WTC11 (cell line): ENCODE measurements at regions of chr7 and their contacts with region 1.

Region 1: GRCh38 chr7:24812310-24812945 is 55.2 kb upstream of the GSDME start:
- DNase-seq: peak; percentile 63
- ATAC-seq: peak; percentile 91
- H3K4me3 Mint-ChIP-seq: no peak overlapping the region
- H3K27ac Mint-ChIP-seq: no peak overlapping the region
- H3K4me1 Mint-ChIP-seq: no peaks in the 10 kb centered on the region
- H3K27me3 Mint-ChIP-seq: no peaks in the 10 kb centered on the region
- CTCF ChIP-seq: peak; percentile 91

Region 2: DNA sequence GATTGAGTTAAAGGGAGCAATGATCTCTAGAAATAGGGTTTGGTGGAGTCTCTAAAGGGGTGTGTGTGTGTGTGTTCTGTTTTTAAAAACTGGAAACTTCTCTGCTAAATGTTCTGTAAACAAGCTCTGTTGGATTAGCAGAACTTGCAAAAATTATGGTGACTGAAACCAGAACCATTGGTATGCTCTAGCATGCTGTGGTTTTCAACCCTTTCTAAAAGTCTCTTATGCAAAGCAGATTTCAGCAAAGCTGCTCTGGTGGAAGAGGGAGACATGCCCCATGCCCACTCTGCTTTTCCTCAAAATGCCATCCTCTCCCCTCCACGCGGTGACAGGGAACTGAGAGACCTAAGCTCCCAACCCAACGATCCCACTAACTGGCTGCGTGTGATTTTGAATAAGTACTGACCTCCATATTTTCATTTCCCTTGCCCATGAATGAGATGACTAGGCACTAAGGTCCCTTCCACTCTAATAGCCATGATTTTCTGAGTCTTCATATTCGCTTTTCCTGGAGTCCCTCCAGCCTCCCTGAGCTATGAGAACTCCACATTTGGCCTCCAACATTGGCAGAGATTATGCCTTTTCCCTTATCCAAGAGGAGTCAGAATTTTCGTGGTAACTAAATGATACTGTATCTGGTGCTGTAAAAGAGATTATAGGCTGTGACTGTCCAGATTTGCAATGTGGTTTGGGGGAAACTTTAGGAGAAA is 356.5 kb before region 1 on chr7:
- CTCF ChIA-PET with region 1: no interaction called
- POLR2A ChIA-PET with region 1: no interaction called
- DNase-seq: no peak
- ATAC-seq: no peak
- H3K4me3 Mint-ChIP-seq: no peak overlapping the region
- H3K27ac Mint-ChIP-seq: no peak overlapping the region
- H3K4me1 Mint-ChIP-seq: peaks cover 8% of the 10 kb centered on the region
- H3K27me3 Mint-ChIP-seq: peaks cover 23% of the 10 kb centered on the region
- CTCF ChIP-seq: no peak

Region 3: DNA sequence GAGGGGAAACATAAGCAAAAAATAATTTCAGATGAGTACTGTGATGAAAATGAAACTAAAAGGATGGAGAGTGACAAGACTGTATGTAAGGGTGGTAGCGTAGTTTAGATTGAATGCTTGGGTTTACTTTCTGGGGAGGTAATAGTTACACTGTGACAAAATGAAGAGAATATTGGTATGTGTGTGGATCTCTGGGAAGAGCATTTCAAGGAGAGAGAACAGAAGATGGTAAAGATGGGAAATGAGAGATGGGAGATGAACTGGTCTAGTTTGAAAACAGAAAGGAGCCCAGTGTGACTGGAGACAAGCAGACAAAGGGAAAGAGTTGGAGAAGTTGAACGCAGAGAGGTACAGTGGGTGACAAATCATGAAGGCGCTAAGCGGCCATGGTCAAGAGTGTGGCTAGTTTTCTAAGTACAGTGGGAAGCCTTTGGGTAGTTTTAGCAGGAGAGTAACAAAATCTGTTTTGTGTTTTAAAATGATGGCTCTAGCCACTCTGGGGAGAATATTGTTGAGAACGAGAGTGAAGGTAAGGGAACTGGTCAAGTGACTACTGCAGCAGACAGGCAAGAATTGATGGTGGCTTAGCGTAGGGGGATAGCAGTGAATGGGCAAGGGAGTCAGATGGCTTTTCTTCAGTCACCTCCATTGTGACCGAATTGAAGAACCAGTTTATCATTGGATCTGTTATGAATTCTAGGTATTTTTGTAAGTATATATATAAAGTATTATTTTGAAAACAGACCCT is 216.6 kb before region 1 on chr7:
- CTCF ChIA-PET with region 1: no interaction called
- POLR2A ChIA-PET with region 1: no interaction called
- DNase-seq: no peak
- ATAC-seq: no peak
- H3K4me3 Mint-ChIP-seq: no peak overlapping the region
- H3K27ac Mint-ChIP-seq: no peak overlapping the region
- H3K4me1 Mint-ChIP-seq: 0 out of 2 replicates have a peak, but pooled peaks cover 3% of the 10 kb centered on the region
- H3K27me3 Mint-ChIP-seq: no peaks in the 10 kb centered on the region
- CTCF ChIP-seq: no peak

Region 4: GRCh38 chr7:24685708-24686107 is 126.7 kb before region 1 on chr7:
- CTCF ChIA-PET with region 1: no interaction called
- POLR2A ChIA-PET with region 1: no interaction called
- DNase-seq: no peak
- ATAC-seq: peak; percentile 90
- H3K4me3 Mint-ChIP-seq: no peak overlapping the region
- H3K27ac Mint-ChIP-seq: peak overlapping the region; percentile 23
- H3K4me1 Mint-ChIP-seq: peaks cover 21% of the 10 kb centered on the region
- H3K27me3 Mint-ChIP-seq: no peaks in the 10 kb centered on the region
- CTCF ChIP-seq: no peak

Region 5: GRCh38 chr7:24727154-24728120 is 85.0 kb before region 1 on chr7:
- CTCF ChIA-PET with region 1: interaction called, 16 read pairs
- POLR2A ChIA-PET with region 1: no interaction called
- DNase-seq: no peak
- ATAC-seq: no peak
- H3K4me3 Mint-ChIP-seq: no peak overlapping the region
- H3K27ac Mint-ChIP-seq: no peak overlapping the region
- H3K4me1 Mint-ChIP-seq: peaks cover 49% of the 10 kb centered on the region
- H3K27me3 Mint-ChIP-seq: peaks cover 34% of the 10 kb centered on the region
- CTCF ChIP-seq: no peak

Region 6: GRCh38 chr7:24800667-24801066 is 11.8 kb before region 1 on chr7:
- CTCF ChIA-PET with region 1: interaction called, 11 read pairs
- POLR2A ChIA-PET with region 1: no interaction called
- DNase-seq: no peak
- ATAC-seq: no peak
- H3K4me3 Mint-ChIP-seq: no peak overlapping the region
- H3K27ac Mint-ChIP-seq: no peak overlapping the region
- H3K4me1 Mint-ChIP-seq: peaks cover 3% of the 10 kb centered on the region
- H3K27me3 Mint-ChIP-seq: no peaks in the 10 kb centered on the region
- CTCF ChIP-seq: no peak

Region 7: DNA sequence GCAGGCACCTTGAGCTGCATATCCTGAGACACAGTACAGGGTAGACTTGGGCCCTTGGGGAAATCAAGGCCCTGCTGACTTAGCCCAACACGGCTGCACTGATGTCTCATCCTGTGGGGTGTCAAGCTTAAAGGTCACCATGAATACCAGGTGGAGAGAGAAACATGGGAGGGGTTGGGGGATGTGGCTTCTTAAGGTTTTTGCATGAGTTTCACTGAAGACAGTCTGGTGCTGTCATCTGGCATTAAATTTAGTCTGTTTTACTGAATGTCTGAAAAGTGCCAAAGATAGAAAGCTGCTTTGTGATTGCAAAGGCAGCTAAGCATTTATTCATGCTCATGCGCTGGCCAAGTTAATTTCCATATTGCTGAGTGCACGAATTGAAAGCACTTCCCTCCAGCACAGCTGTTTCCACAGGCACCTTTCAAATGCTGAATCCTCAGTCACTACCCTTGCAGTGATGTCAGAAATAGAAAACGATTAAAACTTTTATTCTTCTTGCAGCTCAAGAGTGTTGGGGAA is 65.4 kb after region 1 on chr7:
- CTCF ChIA-PET with region 1: interaction called, 35 read pairs
- POLR2A ChIA-PET with region 1: no interaction called
- DNase-seq: no peak
- ATAC-seq: peak; percentile 43
- H3K4me3 Mint-ChIP-seq: peak overlapping the region; percentile 41
- H3K27ac Mint-ChIP-seq: peak overlapping the region; percentile 86
- H3K4me1 Mint-ChIP-seq: peaks cover 76% of the 10 kb centered on the region
- H3K27me3 Mint-ChIP-seq: no peaks in the 10 kb centered on the region
- CTCF ChIP-seq: no peak

Region 8: DNA sequence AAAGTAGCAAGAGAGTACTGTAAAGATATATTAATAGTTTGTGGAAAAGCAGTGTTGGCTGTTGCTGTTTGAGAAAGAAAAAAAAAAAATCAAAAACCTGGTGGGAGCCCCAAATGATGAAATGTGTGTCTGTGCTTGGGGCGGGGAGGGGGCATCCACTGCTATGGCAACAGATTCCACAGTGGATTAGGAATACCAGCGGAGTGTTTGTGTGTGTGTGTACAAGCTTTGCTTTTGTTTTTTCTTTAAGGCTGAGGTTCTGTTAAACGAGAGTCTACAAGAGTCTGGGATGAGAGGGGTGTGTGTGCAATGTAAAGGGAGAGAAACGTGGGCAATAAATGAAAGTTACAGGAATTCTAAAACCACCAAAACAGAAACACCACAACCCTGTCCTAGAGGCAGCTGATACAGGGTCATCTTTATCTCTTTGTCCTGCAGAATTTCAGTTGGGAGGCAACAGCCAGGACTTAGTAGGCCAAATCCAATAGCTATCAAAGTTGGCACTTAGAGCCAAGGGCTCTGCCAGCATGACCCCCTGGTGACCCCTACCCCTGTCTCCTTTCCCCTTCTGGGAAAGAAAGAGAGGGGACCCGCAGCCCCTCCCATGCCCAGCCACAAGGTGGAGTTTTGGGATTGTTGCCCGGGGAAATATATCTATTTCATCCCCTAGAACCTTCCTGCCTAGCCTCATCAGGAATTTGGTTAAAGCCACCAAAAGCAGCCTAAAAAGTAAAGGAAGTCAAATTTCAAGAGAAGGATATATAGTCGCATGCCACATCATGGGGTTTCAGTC is 82.2 kb after region 1 on chr7:
- CTCF ChIA-PET with region 1: interaction called, 12 read pairs
- POLR2A ChIA-PET with region 1: no interaction called
- DNase-seq: peak; percentile 56
- ATAC-seq: peak; percentile 93
- H3K4me3 Mint-ChIP-seq: no peak overlapping the region
- H3K27ac Mint-ChIP-seq: no peak overlapping the region
- H3K4me1 Mint-ChIP-seq: peaks cover 40% of the 10 kb centered on the region
- H3K27me3 Mint-ChIP-seq: no peaks in the 10 kb centered on the region
- CTCF ChIP-seq: 0 out of 2 replicates have a peak, but pooled peaks have one; percentile 16

Region 9: DNA sequence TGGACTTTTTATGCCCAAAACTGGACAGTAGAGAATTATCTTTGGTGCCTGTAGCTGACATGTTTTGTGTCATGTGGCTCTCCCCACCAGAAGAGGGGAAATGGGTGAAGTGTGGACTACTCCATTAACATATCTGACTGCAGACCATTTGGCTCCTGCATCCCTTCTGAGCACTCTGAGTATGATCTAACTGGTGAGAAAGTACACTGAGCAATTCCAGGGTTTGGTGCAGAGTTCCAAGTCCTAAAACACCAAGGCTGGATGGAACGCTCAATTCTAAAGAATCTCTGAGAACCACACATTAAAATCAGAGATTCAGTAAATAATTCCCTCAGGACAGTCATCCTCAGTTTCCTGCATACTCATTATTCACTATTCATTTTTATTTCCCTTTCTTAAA is 190.4 kb after region 1 on chr7:
- CTCF ChIA-PET with region 1: no interaction called
- POLR2A ChIA-PET with region 1: no interaction called
- DNase-seq: no peak
- ATAC-seq: no peak
- H3K4me3 Mint-ChIP-seq: no peak overlapping the region
- H3K27ac Mint-ChIP-seq: no peak overlapping the region
- H3K4me1 Mint-ChIP-seq: peaks cover 19% of the 10 kb centered on the region
- H3K27me3 Mint-ChIP-seq: peaks cover 9% of the 10 kb centered on the region; the same call in 1 of the 2 replicates
- CTCF ChIP-seq: no peak

Region 10: GRCh38 chr7:25069900-25070443 is 257.5 kb after region 1 on chr7:
- CTCF ChIA-PET with region 1: interaction called, 41 read pairs
- POLR2A ChIA-PET with region 1: no interaction called
- DNase-seq: peak; percentile 39
- ATAC-seq: peak; percentile 92
- H3K4me3 Mint-ChIP-seq: peak overlapping the region; percentile 51
- H3K27ac Mint-ChIP-seq: no peak overlapping the region; the same call in 1 of the 2 replicates
- H3K4me1 Mint-ChIP-seq: peaks cover 17% of the 10 kb centered on the region
- H3K27me3 Mint-ChIP-seq: no peaks in the 10 kb centered on the region
- CTCF ChIP-seq: peak; percentile 85

Region 11: DNA sequence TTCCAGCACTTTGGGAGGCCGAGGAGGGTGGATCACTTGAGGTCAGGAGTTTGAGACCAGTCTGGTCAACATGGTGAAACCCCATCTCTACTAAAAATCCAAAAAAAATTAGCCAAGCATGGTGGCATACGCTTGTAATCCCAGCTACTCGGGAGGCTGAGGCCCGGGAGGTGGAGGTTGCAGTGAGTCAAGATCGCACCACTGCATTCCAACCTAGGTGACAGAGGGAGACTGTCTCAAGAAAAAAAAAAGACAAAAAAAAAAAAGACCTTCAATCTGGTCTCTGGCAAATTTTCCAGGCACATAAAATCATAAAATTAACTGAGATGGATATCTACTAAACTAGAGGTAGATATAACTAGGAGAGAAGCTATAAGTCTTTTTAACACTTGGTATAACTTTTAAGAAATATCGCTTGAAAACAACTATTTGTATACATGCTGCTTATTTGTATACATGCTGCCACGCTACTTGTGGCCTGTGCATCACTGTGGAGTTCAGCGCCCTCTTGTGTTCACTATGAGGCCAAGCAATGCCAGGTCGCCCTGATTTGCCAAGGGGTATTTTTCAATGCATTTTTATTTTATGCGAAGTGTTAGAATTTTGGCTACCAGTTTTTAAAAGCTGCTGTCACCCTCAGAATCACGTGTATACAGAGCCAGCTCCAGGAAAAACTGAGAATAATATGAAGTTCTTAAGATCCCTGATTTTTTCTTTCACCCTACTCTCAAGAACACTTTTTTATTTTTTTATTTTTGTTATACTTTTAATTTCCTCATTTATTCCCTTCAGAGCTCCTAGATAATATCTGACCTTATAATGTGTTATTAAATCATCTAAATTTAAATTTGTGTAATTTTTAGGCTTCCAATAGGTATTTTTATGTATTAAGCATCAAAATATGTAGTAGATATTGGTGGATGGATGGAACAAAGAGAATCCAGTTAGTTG is 285.9 kb after region 1 on chr7:
- CTCF ChIA-PET with region 1: interaction called, 138 read pairs
- POLR2A ChIA-PET with region 1: interaction called, 5 read pairs
- DNase-seq: peak; percentile 58
- ATAC-seq: peak; percentile 81
- H3K4me3 Mint-ChIP-seq: no peak overlapping the region
- H3K27ac Mint-ChIP-seq: no peak overlapping the region
- H3K4me1 Mint-ChIP-seq: peaks cover 5% of the 10 kb centered on the region
- H3K27me3 Mint-ChIP-seq: no peaks in the 10 kb centered on the region; the same call in none of the 2 replicates
- CTCF ChIP-seq: peak; percentile 74